K562 (cell line): ENCODE measurements at regions of chr4 and their contacts with region 1.

Region 1: GRCh38 chr4:103008875-103009729 is 10.4 kb downstream of the SLC9B1 start:
- DNase-seq: peak; percentile 23 to 78 (median 38)
- ATAC-seq: peak; percentile 93
- H3K4me3 ChIP-seq: no peak overlapping the region
- H3K27ac ChIP-seq: no peak overlapping the region
- H3K4me1 ChIP-seq: peaks cover 9 to 18% of the 10 kb centered on the region in 2 experiments; a peak in 4 of 5 replicates
- H3K27me3 ChIP-seq: no peaks in the 10 kb centered on the region
- CTCF ChIP-seq: peak; percentile 59 to 91 (median 68); a peak in 5 of 6 replicates
- EP300 ChIP-seq: no peak
- POLR2A ChIP-seq: no peak
- RAD21 ChIP-seq: peak; percentile 94 to 97

Region 2: DNA sequence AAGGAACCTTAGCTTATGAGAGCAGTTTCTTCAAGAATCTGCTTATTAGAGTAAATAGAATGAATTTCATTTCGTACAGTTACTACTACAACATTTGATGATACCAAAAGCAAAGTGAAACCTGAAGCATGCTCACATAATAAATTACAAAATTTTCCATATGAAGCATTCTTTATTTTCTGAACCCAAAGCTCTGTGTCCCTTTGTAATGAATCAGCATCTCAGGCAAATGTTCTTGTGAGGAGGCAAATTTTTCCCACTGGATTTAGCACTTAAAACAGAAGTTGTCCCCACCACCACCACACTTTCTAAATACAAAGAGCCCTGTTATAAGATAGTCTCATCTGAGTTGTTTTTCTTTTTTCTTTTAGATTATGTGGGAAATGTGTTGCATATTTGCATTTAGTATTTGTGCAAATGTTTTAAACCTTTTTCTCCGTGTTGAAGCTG is 578.6 kb before region 1 on chr4:
- CTCF ChIA-PET with region 1: interaction called, 23 read pairs
- POLR2A ChIA-PET with region 1: no interaction called
- in situ Hi-C with region 1: no loop called
- intact Hi-C with region 1: loop called (anchors 1 kb)
- DNase-seq: peak in 2 of 4 experiments; percentile 10 to 25
- ATAC-seq: peak; percentile 56
- H3K4me3 ChIP-seq: peak overlapping the region; percentile 49
- H3K27ac ChIP-seq: peak overlapping the region; percentile 71; the same call in 2 of the 3 replicates
- H3K4me1 ChIP-seq: no peaks in the 10 kb centered on the region; a peak in 1 of 5 replicates
- H3K27me3 ChIP-seq: no peaks in the 10 kb centered on the region
- CTCF ChIP-seq: no peak
- EP300 ChIP-seq: no peak
- POLR2A ChIP-seq: no peak
- RAD21 ChIP-seq: no peak

Region 3: DNA sequence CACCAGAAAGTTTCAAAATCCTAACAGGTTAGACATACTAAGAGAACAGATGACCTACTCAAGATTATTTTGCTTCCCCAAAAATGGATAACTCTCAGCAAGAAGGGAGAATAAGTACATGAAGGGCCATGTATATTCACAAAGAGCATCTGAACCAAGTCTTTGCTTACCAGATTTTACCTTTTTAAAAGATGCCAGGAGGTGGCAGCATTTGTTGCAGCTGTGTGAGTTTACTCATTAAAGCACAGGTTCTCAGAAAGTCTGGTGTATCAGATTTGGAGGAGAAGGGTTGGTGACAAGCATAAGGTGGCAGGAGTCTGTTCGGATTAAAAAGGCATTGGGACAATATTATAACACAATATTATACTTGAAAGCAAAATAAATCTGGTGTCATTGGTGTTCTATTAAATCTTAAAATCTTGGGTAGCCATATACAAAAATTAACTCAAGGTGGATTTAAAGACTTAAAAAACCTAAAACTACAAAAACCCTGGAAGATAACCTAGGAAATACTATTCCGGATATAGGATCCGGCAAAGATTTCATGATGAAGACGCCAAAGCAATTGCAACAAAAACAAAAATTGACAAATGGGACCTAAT is 559.2 kb before region 1 on chr4:
- CTCF ChIA-PET with region 1: interaction called, 5 read pairs
- POLR2A ChIA-PET with region 1: no interaction called
- in situ Hi-C with region 1: loop called (anchors 10 kb)
- intact Hi-C with region 1: loop called (anchors 2 kb)
- DNase-seq: peak; percentile 22 to 64 (median 32)
- ATAC-seq: peak; percentile 83
- H3K4me3 ChIP-seq: no peak overlapping the region
- H3K27ac ChIP-seq: no peak overlapping the region
- H3K4me1 ChIP-seq: peaks cover 0 to 2% of the 10 kb centered on the region in 2 experiments; a peak in 2 of 5 replicates
- H3K27me3 ChIP-seq: no peaks in the 10 kb centered on the region; a peak in 1 of 5 replicates
- CTCF ChIP-seq: peak; percentile 52 to 74 (median 52); a peak in 5 of 6 replicates
- EP300 ChIP-seq: no peak
- POLR2A ChIP-seq: no peak
- RAD21 ChIP-seq: peak; percentile 80 to 82

Region 4: DNA sequence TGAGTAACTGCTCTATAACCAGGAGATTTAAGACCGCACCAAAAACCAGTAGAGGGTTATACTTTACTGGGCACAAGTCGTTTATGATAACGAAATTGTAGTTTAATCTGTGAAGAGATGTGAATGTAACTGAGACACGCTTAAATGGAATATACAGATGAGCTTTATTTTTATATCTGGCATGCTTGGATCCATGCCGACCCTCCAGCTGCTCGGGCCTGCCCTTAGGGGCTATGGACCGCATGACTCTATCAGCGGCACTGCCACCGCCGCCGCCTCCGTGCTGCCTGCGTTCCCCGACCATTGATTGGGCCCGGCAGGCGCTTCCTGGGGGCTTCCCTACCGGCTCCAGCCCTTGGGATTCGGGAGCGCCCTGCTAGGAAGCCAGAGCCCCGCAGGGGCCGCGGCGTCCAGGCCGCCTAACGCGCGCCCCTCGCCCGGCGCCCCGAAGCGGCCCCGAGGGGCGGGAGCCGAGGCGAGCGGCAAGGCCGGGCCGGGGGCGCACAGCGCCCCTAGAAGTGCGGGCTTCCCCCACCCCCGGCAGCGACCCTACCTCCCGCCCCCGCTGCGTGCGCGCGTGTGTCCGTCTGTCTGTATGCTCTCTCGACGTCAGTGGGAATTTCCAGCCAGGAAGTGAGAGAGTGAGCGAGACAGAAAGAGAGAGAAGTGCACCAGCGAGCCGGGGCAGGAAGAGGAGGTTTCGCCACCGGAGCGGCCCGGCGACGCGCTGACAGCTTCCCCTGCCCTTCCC is 508.2 kb before region 1 on chr4 and contains the start of gene NFKB1:
- CTCF ChIA-PET with region 1: no interaction called
- POLR2A ChIA-PET with region 1: no interaction called
- in situ Hi-C with region 1: no loop called
- intact Hi-C with region 1: loop called (anchors 5 kb)
- DNase-seq: peak in 3 of 4 experiments; percentile 37 to 44 (median 39)
- ATAC-seq: peak; percentile 23
- H3K4me3 ChIP-seq: peak within 1 kb of the TSS; percentile 81
- H3K27ac ChIP-seq: peak within 1 kb of the TSS; percentile 91
- H3K4me1 ChIP-seq: peaks cover 13 to 18% of the 10 kb centered on the region in 2 experiments; a peak in 4 of 5 replicates
- H3K27me3 ChIP-seq: no peaks in the 10 kb centered on the region
- CTCF ChIP-seq: no peak
- EP300 ChIP-seq: no peak
- POLR2A ChIP-seq: no peak
- RAD21 ChIP-seq: no peak
- polyA plus RNA-seq, gene NFKB1: 2.4 to 3.2 TPM

Region 5: DNA sequence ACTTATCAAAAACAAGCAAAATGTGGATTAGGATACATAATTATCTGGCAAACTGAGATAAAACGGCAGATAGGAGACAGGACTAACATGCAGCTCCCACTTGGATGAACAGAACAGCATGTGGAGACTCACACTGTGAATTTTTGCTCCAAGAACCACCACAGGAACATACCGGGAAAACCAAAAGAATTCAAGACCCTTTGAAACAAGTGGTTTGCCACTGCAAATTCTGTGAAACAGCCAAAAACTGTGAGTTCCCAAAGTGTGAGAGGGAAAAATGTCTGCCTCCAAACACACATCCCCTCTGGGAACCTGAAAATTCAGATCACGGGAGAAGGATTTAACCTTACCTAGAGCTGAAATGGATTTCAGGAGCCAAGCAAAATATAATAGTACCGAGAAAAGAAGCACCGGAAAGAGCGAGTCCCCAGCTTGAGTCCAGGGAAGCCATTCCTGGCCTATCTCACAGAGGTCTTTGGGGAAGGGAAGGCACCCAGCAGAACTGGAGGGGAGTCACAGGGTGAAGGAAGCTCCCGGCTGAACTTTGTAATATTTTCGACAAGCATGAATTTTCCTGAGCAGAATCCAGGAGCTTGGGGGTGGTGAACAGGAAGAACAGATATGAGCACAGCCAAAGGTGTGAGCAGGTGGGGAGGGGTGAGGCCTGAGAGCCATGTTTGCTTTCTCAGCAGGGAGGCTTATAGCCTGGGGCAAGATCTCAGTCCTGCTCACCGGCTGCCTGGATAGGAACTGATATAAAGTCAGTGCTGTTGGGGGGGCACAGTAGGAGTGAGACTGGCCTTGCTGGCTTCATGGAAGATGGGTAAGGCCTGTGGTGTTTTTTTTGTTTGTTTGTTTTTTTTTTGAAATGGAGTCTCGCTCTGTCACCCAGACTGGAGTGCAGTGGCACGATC is 272.2 kb before region 1 on chr4:
- CTCF ChIA-PET with region 1: no interaction called
- POLR2A ChIA-PET with region 1: no interaction called
- in situ Hi-C with region 1: no loop called
- intact Hi-C with region 1: loop called (anchors 5 kb)
- DNase-seq: peak in 1 of 4 experiments; percentile 57
- ATAC-seq: peak; percentile 81
- H3K4me3 ChIP-seq: no peak overlapping the region
- H3K27ac ChIP-seq: no peak overlapping the region
- H3K4me1 ChIP-seq: peaks cover 9 to 10% of the 10 kb centered on the region in 2 experiments
- H3K27me3 ChIP-seq: no peaks in the 10 kb centered on the region
- CTCF ChIP-seq: no peak
- EP300 ChIP-seq: no peak
- POLR2A ChIP-seq: no peak
- RAD21 ChIP-seq: no peak

Region 6: DNA sequence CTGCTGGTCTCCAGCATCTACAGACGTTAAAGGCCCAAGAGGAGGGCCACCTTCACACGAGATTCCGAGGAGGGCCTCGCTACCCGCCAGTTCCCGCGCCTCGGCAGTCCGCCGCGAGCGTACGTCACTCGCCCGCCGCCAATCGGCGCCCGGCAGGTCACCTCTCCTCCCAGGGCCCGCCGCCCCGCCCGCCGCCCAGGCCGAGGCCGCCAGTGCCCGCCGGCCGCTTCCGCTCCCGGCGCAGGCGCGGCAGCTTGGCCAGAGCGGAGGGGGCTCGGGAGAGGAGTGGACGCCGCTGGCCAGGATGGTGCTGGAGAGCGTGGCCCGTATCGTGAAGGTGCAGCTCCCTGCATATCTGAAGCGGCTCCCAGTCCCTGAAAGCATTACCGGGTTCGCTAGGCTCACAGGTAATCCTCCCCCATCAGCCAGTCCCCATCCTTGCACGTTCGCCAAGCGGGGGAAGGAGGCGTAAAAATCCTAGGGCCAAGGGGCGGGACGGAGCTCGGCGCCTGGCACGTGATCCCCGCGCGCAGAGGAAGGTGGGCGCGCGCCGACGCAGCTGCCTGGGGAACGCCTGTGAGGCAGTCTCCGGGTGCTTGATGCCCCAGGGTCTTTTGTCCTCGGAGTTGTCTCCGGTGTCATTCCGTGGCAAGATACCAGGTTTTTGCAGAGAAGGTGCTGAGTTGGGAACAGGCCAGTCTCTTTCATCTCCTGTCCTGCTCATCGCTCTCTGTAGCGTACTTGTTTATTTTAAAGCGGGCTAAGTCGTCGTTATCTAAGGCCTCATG is 140.1 kb before region 1 on chr4 and contains the start of gene CISD2:
- CTCF ChIA-PET with region 1: no interaction called
- POLR2A ChIA-PET with region 1: no interaction called
- in situ Hi-C with region 1: no loop called
- intact Hi-C with region 1: loop called (anchors 5 kb)
- DNase-seq: peak; percentile 85 to 95 (median 88)
- ATAC-seq: peak; percentile 83
- H3K4me3 ChIP-seq: peak within 1 kb of the TSS; percentile 59
- H3K27ac ChIP-seq: peak within 1 kb of the TSS; percentile 98
- H3K4me1 ChIP-seq: peaks cover 8 to 10% of the 10 kb centered on the region in 2 experiments
- H3K27me3 ChIP-seq: no peaks in the 10 kb centered on the region
- CTCF ChIP-seq: no peak; a peak in 2 of 6 replicates
- EP300 ChIP-seq: peak; percentile 27; the same call in 1 of the 2 replicates
- POLR2A ChIP-seq: peak; percentile 90
- RAD21 ChIP-seq: no peak
- polyA plus RNA-seq, gene CISD2: 87.2 to 91.4 TPM